ENCODE measurements at regions of chr17 and their contacts with region 1.

Region 1: GRCh38 chr17:74744714-74745547 is 3.5 kb upstream of the NHERF1 start:
- DNase-seq: peak; percentile 94
- H3K4me3 ChIP-seq: peak overlapping the region; percentile 19
- H3K27ac ChIP-seq: peak overlapping the region; percentile 31
- H3K4me1 ChIP-seq: peaks cover 9% of the 10 kb centered on the region
- H3K27me3 ChIP-seq: no peaks in the 10 kb centered on the region
- CTCF ChIP-seq: peak; percentile 99

Region 2: DNA sequence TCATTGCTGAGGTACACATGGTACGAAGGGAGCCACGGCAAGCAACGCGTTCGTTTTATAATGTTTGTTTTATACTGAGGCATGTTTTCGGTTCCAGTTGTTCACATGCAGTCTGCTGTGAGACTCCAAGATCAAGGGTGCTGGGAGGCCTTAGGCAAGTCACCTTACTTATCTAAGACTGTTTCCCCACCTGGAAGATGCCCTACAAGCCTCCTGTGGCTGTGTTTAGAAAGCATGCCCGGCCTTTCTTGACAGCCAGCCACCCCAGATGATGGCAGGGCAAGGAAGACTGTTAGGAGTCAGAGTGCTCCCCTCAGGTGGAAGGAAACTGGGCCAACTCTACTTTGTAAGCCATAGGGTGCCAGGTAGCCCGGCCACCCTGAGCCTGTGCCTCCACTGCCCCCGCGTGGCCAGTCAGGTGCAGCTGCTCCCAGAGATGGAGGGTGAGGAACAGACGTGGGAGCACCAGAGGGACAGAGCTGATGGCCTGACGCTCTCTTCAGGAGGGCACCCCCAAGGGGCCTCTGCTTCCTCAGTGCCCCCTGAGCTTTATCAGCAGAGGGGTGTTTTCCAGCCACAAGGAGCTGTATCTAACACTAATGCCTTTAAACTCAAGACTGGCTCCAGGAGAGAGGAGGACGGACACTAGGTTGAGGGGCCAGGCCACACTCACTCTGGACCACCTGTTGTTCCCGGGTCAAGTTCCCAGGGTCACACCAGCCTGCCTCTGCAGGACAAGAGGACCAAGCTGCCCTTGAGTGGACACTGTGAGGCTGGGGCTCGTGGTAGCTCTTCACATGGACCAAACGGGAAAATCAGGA is 25.8 kb after region 1 on chr17:
- intact Hi-C with region 1: loop called (anchors 2 kb)
- DNase-seq: peak; percentile 82
- H3K4me3 ChIP-seq: no peak overlapping the region
- H3K27ac ChIP-seq: no peak overlapping the region
- H3K4me1 ChIP-seq: peaks cover 5% of the 10 kb centered on the region
- H3K27me3 ChIP-seq: no peaks in the 10 kb centered on the region
- CTCF ChIP-seq: peak; percentile 88

Region 3: DNA sequence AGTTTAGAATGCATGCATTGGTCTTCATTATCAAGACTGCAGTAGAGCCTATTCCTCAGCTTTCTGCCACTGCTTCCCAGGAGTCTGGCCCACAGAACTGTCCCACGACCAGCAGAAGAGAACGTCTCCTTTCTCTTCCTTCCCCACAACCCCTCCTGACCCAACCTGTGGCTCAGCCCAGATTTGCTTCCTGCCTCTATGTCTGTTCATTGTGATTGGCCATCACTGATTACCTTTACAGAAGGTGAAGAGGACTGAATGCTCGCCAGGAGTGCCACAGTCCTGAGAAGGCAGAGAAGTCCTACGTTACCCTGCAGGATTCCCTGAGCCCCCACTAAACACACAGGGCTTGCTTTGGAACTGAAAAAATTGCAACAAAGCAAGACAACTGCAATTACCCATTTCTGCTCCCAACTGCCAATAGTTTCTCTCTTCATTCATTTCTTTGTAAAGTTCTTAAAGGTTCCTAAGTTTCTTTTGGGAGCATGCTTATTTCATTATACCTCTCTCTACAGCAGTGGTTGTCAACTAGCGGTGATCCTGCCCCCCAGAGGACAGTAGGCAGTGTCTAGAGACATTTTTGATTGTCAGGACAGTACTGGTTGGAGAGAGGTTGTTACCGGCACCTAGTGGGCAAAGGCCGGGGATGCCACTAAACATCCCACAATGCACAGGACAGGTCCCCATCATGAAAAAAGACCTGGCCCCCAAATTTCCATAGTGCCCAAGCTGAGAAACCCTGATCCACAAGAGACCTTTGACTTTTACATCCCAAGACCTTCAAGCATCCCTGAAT is 35.7 kb after region 1 on chr17:
- intact Hi-C with region 1: loop called (anchors 5 kb)
- DNase-seq: no peak
- H3K4me3 ChIP-seq: no peak overlapping the region
- H3K27ac ChIP-seq: no peak overlapping the region
- H3K4me1 ChIP-seq: peaks cover 6% of the 10 kb centered on the region
- H3K27me3 ChIP-seq: no peaks in the 10 kb centered on the region
- CTCF ChIP-seq: no peak

Region 4: DNA sequence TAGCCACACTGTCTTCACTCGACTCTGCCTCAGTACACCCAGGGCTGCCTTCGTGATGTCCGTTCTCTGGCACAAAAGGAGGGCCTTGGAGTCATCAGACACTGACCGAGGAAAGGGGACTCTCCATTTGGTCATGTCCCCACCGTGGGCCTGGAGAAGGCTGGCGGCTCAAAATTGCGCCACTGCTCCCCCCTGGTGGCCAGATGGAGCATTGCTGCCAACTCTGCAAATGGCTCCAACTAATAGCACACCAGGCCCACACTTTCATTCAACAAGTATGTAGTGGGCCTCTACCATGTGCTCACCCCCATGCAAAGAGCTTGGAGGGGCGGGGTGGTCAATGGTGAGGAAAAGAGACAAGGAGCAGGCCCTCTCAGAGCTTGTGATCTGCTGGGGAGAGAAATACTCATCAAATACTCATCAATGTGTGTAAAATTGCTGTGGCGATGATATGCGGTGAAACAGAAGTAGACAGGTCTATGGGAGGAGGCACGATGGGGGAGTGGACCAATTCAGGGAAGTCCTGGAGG is 120.0 kb after region 1 on chr17:
- intact Hi-C with region 1: loop called (anchors 5 kb)
- DNase-seq: peak; percentile 77
- H3K4me3 ChIP-seq: no peak overlapping the region
- H3K27ac ChIP-seq: no peak overlapping the region
- H3K4me1 ChIP-seq: peaks cover 9% of the 10 kb centered on the region
- H3K27me3 ChIP-seq: peaks cover 23% of the 10 kb centered on the region
- CTCF ChIP-seq: peak; percentile 96

Measured in colonic mucosa (tissue), 4 donors.